ENCODE measurements at regions of chr16 and their contacts with region 1.

Region 1: DNA sequence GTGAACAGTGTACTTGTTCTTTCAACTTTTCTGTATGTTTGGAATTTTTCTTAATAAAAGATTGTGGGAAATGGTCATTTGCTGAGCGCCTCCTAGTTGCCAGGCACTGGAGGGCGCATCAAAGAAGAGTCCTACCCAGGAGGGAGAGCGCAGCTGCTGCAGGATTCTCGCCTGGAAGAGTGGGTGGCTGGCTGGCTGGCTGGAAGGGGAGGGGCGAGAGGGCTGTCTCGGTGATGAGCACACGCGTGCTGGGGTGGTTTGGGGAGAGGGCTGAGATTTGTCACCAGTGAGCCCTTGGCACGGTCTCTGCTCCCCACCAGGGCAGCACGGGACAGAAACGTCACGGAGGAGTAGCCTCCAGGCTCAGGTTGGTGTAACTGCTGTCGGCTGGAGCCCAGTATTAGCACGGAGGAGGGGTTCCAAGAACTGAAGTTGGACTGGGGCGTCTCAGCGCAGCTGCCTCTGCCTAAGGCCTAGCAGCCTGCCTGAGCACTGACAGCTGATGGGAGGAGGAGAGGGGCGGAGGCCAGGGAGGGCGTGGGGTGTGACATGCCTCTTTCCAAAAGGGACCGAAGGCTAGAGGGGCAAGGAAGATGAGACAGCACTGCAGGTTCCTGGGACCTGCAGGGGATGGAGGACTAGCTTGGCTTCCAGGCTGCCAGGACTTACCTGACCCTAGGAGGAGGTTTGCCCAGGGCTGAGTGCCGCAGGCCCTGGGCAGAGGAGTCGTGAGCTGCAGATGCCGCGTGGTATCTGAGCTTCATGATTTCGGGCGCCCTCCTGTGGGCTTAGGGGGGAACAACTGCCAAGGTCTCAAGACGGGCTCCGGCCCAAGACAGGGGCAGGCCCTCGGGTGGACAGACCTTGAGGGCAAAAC is 5.7 kb downstream of the LDHD start:
- DNase-seq: peak; percentile 97
- H3K4me3 ChIP-seq: peak overlapping the region; percentile 34 to 41 (median 37)
- H3K27ac ChIP-seq: peak overlapping the region; percentile 80 to 86 (median 84)
- H3K4me1 ChIP-seq: peaks cover 71 to 89% (median 82%) of the 10 kb centered on the region in 4 donors
- H3K27me3 ChIP-seq: no peaks in the 10 kb centered on the region
- CTCF ChIP-seq: peak; percentile 92 to 98 (median 96)
- EP300 ChIP-seq: no peak
- POLR2A ChIP-seq: no peak

Region 2: DNA sequence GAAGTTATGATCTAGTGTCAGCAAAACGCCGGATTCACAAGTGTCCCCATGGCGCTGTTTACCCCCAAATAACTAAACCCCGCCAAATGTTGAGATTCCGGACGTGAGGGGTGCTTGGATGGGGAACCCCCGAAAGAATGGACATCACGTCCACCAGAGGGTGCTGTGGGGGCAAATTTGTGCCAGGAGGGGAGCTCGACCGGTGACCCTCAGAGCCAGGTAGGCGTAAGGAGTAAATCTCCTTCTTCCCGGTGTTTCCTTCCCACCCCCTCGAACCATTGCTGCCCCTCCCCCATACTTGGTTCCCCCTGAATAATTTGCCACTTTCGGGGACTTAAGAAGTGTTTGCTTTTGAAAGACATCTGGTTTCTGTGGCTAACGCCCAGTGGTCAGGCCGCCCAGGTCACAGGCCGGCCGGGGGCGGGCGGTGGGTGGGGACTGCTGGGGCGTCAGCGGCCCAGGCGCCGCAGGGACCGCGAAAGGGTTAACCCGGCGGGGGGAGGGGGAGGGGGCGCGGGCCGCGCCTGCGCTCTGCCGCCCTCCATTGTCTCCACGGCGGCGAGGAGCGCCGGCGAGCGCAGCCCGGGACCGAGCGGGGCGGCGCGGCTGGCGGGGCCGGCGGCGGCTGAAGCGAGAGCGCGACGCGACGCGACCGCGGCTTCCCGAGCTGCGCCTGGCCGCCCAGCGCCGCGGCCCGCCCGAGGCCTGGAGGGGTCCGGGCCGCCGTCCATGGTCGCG is 112.2 kb before region 1 on chr16 and contains the start of gene ZNRF1:
- intact Hi-C with region 1: loop called (anchors 1 kb)
- DNase-seq: peak; percentile 92
- H3K4me3 ChIP-seq: peak within 1 kb of the TSS; percentile 84 to 95 (median 92)
- H3K27ac ChIP-seq: peak within 1 kb of the TSS; percentile 81 to 90 (median 86)
- H3K4me1 ChIP-seq: peaks cover 34 to 42% (median 38%) of the 10 kb centered on the region in 4 donors
- H3K27me3 ChIP-seq: no peaks in the 10 kb centered on the region
- CTCF ChIP-seq: peak; percentile 80 to 85 (median 81)
- EP300 ChIP-seq: no peak
- POLR2A ChIP-seq: no peak
- total RNA-seq, gene ZNRF1: 18.2 to 28.3 (median 23.6) TPM

Region 3: GRCh38 chr16:75064403-75065148 is 46.3 kb before region 1 on chr16:
- intact Hi-C with region 1: loop called (anchors 5 kb)
- DNase-seq: no peak
- H3K4me3 ChIP-seq: no peak overlapping the region
- H3K27ac ChIP-seq: peak overlapping the region; percentile 17 to 83 (median 55)
- H3K4me1 ChIP-seq: peaks cover 21 to 55% (median 51%) of the 10 kb centered on the region in 4 donors
- H3K27me3 ChIP-seq: no peaks in the 10 kb centered on the region
- CTCF ChIP-seq: no peak
- EP300 ChIP-seq: no peak
- POLR2A ChIP-seq: no peak